ENCODE measurements at regions of chr7 and their contacts with region 1.

Region 1: DNA sequence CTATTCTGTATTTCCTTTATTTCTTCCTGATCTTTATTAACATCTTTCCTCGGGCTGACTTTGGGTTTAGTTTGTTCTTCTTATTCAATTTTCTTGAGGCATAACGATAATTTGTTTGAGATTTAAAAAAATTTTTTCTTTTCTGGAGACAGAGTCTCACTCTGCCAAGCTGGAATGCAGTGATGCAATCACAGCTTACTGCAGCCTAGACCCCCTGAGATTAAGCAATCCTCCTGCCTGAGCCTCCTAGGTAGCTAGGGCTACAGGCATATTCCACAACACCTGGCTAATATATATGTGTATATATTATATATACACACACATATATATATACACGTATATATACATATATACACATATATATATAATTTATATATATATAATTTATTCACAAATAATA is 540.2 kb downstream of the NXPH1 start:
- DNase-seq: no peak

Region 2: DNA sequence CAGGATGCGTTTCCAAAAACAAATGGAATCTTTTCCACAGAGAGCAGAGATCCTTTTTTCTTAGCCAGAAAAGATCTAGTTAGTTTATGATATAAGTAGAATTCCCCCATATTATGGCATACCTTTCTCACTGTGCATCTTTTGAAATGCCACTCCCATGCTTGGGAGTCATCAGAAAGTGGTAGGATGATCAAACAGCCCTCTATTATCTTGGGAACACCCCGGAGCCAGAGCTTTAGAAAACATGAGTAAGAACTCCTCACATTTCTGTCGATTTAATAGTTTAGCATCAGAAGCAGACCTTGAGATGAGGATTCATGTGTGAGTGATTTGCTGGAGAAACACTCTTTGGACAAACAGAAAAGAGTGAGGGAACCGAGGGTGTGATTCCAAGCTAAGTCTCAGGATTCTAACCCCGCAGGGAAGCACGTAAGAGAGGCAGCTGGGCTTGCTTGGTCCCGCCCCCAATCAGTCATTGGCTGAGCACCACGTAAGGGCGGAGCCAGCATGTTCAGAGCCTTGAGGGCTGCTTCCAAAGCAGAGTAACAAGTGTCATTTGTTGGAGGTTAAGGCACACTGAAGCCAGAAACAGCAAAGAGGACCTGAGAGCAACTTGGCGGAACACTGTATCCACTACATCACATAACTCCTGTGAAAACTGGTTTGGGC is 583.9 kb before region 1 on chr7:
- intact Hi-C with region 1: loop called in 1 of 2 experiments (anchors 5 kb)
- DNase-seq: no peak

Region 3: GRCh38 chr7:9043713-9044112 is 70.1 kb after region 1 on chr7:
- intact Hi-C with region 1: no loop called
- DNase-seq: no peak